AG04449 (cell line): ENCODE measurements at regions of chr16 and their contacts with region 1.

Region 1: DNA sequence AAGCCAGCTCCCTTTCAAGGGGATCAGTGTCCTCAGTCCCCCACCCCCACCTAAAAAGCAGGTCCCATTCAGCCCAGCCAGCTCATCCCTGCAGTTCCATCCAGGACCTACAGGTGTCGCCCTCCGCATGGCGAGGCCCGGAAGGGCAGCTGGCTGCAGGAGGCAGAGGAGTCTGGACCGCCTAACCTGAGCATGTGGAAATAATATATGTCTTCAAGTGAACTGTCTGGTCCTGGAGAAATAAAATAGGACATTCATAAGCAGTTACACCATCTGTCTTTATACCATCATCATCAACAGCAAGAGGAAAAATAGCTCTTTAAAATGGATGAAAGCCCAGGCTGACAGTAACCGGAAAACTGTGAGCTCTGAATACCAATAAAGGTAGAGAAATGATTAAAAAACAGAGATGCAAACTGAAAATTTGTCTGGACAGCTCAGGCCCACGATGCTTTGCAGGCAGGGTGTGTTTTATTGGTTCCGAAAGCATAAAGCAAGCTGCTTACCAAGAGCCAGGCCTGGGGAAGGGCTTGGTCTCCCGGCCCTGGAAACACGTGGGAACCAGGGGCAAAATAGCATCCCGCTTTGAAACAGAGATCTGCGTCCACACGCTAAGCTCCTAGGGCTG is 215.2 kb downstream of the ZFHX3 start:
- DNase-seq: no peak
- H3K4me3 ChIP-seq: no peak overlapping the region
- CTCF ChIP-seq: peak; percentile 98

Region 2: DNA sequence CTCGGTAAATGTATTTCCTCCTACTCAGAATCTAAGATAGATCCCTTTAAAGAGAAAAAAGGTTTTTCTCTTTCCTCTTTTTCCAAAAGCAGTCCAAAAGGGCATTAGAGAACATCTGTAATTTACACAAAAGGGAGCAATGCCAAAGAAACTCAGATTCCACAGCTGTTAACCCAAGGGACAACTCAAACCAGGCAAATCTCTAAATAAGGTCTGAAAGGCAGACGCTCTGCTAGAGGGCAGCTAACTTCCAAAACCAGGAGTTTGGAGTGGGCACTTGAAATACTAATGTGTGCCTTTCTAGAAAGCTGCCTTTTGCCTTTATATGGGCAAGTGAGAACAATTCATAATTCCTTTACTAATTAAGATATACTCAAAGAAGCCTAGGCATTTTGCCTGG is 220.5 kb before region 1 on chr16:
- CTCF ChIA-PET with region 1: no interaction called
- POLR2A ChIA-PET with region 1: no interaction called
- DNase-seq: no peak
- H3K4me3 ChIP-seq: no peak overlapping the region
- CTCF ChIP-seq: no peak

Region 3: DNA sequence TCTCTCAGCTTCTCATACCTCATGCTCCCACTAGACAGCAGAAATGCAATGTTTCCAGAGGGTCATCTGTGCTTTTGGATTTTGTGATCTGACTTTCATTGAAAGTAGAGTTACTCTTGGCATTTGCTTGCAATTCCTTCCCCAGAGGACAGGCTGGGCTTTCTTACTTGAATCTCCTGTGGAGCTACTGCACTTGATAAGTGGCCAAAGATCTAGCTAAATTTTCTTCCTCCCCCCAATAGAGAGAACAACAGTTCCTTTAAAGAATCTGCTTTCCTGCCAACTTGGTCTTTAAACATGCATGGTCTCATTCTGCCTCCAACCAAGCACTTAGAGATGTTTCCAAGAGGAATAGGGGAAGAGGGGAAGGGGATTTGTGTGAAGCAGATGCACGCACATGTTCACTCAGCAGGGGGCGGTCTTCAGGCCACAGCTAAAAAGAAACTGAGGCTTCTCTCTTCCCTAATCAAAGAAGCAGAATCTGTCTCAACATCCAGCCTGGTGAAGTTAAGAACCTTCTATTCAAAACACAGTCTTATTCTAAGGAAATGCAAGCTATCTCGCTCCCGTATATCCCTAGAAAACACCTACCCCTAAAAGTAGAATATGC is 14.4 kb before region 1 on chr16:
- CTCF ChIA-PET with region 1: interaction called, 33 read pairs
- POLR2A ChIA-PET with region 1: interaction called, 3 read pairs
- DNase-seq: no peak
- H3K4me3 ChIP-seq: no peak overlapping the region
- CTCF ChIP-seq: no peak

Region 4: DNA sequence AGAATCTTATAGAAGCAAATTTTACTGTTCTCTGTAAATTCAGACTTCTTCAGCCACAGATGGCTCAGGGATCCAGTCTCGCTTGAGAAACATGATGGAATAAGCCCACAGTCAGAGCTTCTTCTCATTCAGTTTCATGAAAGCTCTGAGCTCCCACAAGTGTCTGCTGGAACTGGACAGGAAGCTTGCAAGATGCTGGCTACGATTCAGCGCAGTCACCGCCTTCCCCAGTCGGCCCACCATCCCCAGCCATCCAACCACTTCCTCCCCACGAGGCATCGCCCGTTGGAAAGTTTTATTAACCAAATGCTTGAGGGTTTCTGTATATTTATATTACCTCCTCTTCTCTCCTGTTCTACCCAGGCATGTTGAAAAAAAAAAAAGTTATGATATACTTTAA is 43.5 kb after region 1 on chr16:
- CTCF ChIA-PET with region 1: interaction called, 33 read pairs
- POLR2A ChIA-PET with region 1: no interaction called
- DNase-seq: peak; percentile 61
- H3K4me3 ChIP-seq: no peak overlapping the region; the same call in 1 of the 2 replicates
- CTCF ChIP-seq: no peak

Region 5: DNA sequence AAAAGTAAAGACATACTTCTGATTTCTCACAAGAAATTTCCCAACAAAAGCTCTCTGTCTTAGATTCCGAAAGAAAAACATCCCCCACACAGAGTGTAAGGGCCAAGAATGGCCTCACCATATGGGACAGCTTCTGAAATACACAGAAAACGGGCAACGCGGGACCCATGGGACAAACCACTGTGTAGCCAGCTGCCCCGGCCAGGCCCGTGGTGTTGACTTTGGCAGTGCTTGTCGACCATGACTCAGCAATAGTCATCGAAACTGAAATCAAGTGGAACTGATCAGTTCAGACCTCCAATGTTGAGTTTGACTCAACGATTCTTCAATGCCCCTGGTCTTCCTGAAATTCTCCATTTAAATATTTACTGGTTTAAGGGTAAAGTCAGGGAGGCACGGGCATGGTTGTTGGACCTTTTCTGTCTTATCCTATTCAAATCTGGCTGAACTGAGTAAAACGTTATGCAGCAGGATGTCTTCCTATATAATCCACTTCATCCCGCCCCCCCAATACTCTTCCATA is 187.7 kb after region 1 on chr16:
- CTCF ChIA-PET with region 1: interaction called, 10 read pairs
- POLR2A ChIA-PET with region 1: no interaction called
- DNase-seq: peak; percentile 60
- H3K4me3 ChIP-seq: no peak overlapping the region
- CTCF ChIP-seq: no peak

Region 6: DNA sequence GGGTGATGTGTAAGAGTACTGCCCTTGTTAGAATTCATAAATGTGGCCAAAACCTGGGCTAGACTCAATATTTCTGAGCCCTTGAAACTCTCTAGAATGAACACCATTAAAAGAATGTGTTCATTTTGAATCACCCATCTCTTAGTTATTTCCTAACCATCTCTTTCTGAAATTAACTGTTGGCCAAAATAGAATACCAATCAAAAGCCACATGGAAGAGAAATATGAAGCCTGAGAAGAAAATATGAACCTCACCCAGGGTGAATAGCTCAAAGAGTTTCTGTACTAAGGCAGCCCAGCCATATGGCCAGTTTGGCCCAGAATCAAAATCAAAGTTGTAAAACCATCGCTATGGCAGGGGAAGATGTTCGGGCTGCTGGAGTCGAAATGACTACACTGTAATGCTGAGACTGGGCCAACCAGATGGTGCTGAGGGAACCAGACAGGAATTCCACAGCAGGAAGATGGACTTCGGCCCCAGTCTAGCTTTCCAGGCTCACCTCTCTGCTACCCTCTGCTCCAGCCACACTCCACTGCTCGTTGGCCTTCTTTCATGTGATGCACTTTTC is 369.5 kb after region 1 on chr16:
- CTCF ChIA-PET with region 1: interaction called, 14 read pairs
- POLR2A ChIA-PET with region 1: no interaction called
- DNase-seq: peak; percentile 97
- H3K4me3 ChIP-seq: no peak overlapping the region
- CTCF ChIP-seq: no peak

Region 7: GRCh38 chr16:73240928-73241327 is 408.2 kb after region 1 on chr16:
- CTCF ChIA-PET with region 1: no interaction called
- POLR2A ChIA-PET with region 1: no interaction called
- DNase-seq: no peak
- H3K4me3 ChIP-seq: no peak overlapping the region
- CTCF ChIP-seq: no peak